Activated T-helper 2 cell treated with anti-CD3 and anti-CD28 coated beads, Interferon-gamma antibody, Interleukin-2, Interleukin-4, amounts not matched to agents 10 μg/mL and 5 μg/mL and 100 μg/mL, durations not matched to agents 14 hours and 24 hours and 36 hours (primary cell): ENCODE measurements at regions of chr6 and their contacts with region 1.

Region 1: DNA sequence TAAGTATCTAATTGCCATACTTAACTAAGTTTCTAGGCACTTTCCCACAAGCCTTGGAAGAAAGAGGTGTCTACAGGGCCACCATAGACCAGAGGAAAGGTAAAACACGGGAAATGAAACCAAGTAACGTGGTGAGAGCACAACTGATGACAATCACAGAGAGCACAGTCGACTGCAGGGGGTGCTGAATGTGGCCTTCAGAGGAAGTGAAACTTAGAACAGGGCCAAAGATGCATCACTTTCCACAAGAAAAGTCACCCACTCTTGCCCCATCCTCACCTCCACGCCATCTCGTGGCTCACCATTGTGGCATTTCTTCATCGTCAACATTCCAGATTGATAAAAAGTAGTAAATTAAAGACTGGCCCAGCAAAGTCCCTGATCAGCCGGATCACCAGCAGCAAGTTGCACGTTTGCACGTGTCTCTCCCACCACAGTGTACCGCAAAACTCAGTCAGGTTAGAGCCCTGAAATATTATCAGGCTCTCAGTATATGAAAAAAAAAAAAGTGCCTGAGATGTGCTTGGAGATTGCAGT is 31.4 kb downstream of the HIVEP2 start:
- DNase-seq: peak; percentile 75
- H3K4me3 Mint-ChIP-seq: peak overlapping the region; percentile 48
- H3K27ac Mint-ChIP-seq: peak overlapping the region; percentile 87
- H3K4me1 Mint-ChIP-seq: peaks cover 67% of the 10 kb centered on the region
- H3K27me3 Mint-ChIP-seq: no peaks in the 10 kb centered on the region

Region 2: DNA sequence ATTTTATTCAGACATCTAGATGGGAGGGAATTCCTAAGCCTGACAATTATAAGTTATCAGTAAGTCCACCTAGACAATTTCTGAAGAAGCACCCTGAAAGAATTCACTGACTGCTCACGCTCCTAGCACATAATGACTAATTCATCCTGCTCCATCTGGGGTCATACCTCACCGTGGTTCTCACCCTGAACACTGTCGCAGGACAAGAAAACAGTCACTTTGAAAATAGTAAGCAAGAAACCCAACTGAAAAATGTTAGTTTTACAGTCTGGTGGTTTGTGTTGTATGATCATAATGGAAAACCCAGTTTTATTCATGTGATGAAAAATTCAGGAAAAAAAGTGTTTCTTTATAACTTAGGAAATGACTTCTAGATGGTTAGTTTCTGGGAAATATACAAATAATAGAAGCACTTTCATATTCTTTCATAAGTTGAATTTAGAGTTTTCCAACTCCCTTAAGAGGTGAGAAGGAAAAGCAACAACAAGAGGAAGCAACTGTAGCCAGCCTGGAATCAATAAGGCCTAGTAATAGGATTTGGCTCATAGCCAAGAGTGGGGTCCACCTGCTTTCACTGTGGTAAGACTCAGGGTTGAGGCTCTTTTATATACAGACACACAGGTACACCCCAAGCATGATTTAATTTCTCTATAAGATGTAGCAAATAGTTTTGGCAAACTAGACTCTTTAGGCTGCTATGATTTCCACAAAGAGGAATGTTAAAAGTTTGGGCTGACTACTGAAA is 62.7 kb before region 1 on chr6:
- intact Hi-C with region 1: loop called (anchors 1 kb)
- DNase-seq: no peak
- H3K4me3 Mint-ChIP-seq: peak overlapping the region; percentile 21
- H3K27ac Mint-ChIP-seq: peak overlapping the region; percentile 83
- H3K4me1 Mint-ChIP-seq: peaks cover 90% of the 10 kb centered on the region
- H3K27me3 Mint-ChIP-seq: no peaks in the 10 kb centered on the region

Region 3: GRCh38 chr6:142871910-142872331 is 41.7 kb before region 1 on chr6:
- intact Hi-C with region 1: loop called (anchors 1 kb)
- DNase-seq: peak; percentile 33
- H3K4me3 Mint-ChIP-seq: peak overlapping the region; percentile 57
- H3K27ac Mint-ChIP-seq: peak overlapping the region; percentile 75
- H3K4me1 Mint-ChIP-seq: peaks cover 71% of the 10 kb centered on the region
- H3K27me3 Mint-ChIP-seq: no peaks in the 10 kb centered on the region

Region 4: DNA sequence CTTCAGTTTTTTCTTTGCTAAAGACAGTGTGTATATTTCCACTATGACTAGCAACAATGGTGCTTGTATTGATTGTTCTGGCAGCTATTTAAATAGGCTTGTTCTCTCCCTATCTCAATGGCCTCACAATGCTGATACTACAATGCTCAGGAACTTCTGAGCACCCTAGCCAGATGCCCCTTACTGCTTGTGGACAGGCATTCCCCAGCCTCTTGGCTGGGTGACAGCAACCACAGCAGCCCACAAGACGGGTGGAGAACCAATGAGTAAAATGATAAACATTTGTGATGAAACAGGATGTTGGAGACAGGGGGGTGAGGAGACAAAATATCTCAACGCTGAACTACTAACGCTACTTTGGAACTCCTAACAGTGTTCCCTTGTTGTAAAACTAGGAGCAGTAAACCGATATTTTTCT is 10.9 kb before region 1 on chr6:
- intact Hi-C with region 1: loop called (anchors 1 kb)
- DNase-seq: peak; percentile 64
- H3K4me3 Mint-ChIP-seq: peak overlapping the region; percentile 53
- H3K27ac Mint-ChIP-seq: peak overlapping the region; percentile 84
- H3K4me1 Mint-ChIP-seq: peaks cover 60% of the 10 kb centered on the region
- H3K27me3 Mint-ChIP-seq: no peaks in the 10 kb centered on the region

Region 5: GRCh38 chr6:143806282-143807102 is 892.9 kb after region 1 on chr6:
- intact Hi-C with region 1: loop called (anchors 10 kb)
- DNase-seq: peak; percentile 19
- H3K4me3 Mint-ChIP-seq: no peak overlapping the region
- H3K27ac Mint-ChIP-seq: peak overlapping the region; percentile 84
- H3K4me1 Mint-ChIP-seq: peaks cover 46% of the 10 kb centered on the region
- H3K27me3 Mint-ChIP-seq: no peaks in the 10 kb centered on the region